Activated B cell treated with CpG ODN at 0.5 μM for 24 hours (primary cell): ENCODE measurements at regions of chr14 and their contacts with region 1.

Region 1: DNA sequence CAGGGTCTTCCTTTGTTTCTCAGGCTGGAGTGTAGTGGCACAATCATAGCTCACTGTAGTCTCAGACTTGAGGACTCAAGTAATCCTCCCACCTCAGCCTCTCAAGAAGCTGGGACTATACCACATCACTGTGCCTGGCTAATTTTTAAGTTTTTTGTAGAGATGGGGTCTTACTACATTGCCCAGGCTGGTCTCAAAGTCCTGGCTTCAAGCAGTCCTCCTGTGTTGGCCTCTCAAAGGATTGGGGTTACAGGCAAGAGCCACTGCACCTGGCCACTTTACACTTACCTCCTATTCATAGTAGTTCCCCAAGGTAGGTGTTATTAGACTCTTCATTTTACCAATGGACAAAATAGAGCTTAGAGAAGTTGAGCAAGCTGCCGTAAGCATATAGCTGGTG is 29.2 kb downstream of the STYX start:
- DNase-seq: no peak
- ATAC-seq: no peak
- H3K4me3 Mint-ChIP-seq: no peak overlapping the region
- H3K27ac Mint-ChIP-seq: no peak overlapping the region
- H3K4me1 Mint-ChIP-seq: peaks cover 6% of the 10 kb centered on the region
- H3K27me3 Mint-ChIP-seq: no peaks in the 10 kb centered on the region
- CTCF ChIP-seq: no peak

Region 2: DNA sequence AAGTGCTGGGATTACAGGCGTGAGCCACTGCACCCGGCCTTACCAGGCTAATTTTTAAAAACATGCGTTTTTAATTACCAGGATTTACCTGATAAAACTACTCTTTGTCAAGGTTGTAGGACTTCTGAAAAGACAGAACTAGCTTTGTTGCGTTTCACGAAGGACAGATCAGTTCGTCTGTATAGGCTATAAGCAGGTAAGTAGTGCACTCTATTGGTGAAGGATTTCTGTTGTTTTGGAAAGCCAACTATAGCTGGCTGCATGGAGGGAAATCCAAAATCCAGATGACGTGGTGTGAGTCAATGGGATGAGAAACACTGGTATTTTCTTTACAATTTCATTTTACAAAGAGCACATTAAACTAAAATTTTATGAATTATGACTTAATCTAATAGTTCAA is 17.7 kb after region 1 on chr14:
- CTCF ChIA-PET with region 1: no interaction called
- POLR2A ChIA-PET with region 1: no interaction called
- intact Hi-C with region 1: loop called (anchors 2 kb)
- DNase-seq: no peak
- ATAC-seq: no peak
- H3K4me3 Mint-ChIP-seq: no peak overlapping the region
- H3K27ac Mint-ChIP-seq: no peak overlapping the region
- H3K4me1 Mint-ChIP-seq: no peaks in the 10 kb centered on the region
- H3K27me3 Mint-ChIP-seq: no peaks in the 10 kb centered on the region
- CTCF ChIP-seq: no peak